ENCODE measurements at regions of chrX and their contacts with region 1.

Region 1: GRCh38 chrX:110276778-110277177 is 41.1 kb downstream of the AMMECR1 start:
- DNase-seq: no peak
- H3K4me3 ChIP-seq: no peak overlapping the region
- H3K4me3 Mint-ChIP-seq: no peak overlapping the region
- H3K27ac Mint-ChIP-seq: no peak overlapping the region
- H3K4me1 ChIP-seq: no peaks in the 10 kb centered on the region
- H3K4me1 Mint-ChIP-seq: no peaks in the 10 kb centered on the region
- H3K27me3 ChIP-seq: no peaks in the 10 kb centered on the region
- H3K27me3 Mint-ChIP-seq: no peaks in the 10 kb centered on the region
- CTCF ChIP-seq: no peak

Region 2: GRCh38 chrX:110210417-110211139 is 66.2 kb before region 1 on chrX:
- CTCF ChIA-PET with region 1: no interaction called
- POLR2A ChIA-PET with region 1: no interaction called
- intact Hi-C with region 1: loop called (anchors 10 kb)
- DNase-seq: no peak
- H3K4me3 ChIP-seq: no peak overlapping the region
- H3K4me3 Mint-ChIP-seq: no peak overlapping the region
- H3K27ac Mint-ChIP-seq: no peak overlapping the region
- H3K4me1 ChIP-seq: peaks cover 2% of the 10 kb centered on the region
- H3K4me1 Mint-ChIP-seq: peaks cover 6% of the 10 kb centered on the region
- H3K27me3 ChIP-seq: no peaks in the 10 kb centered on the region
- H3K27me3 Mint-ChIP-seq: no peaks in the 10 kb centered on the region
- CTCF ChIP-seq: no peak

Measured in Caco-2 (cell line).